ENCODE measurements at regions of chr19 and their contacts with region 1.

Region 1: GRCh38 chr19:40403262-40403984 is 9.8 kb downstream of the PRX start:
- DNase-seq: peak; percentile 95
- H3K4me3 ChIP-seq: peak overlapping the region; percentile 41 to 68 (median 59)
- H3K27ac ChIP-seq: peak overlapping the region; percentile 86 to 96 (median 90)
- H3K4me1 ChIP-seq: peaks cover 0 to 26% (median 12%) of the 10 kb centered on the region in 4 donors
- H3K27me3 ChIP-seq: no peaks in the 10 kb centered on the region
- CTCF ChIP-seq: no peak
- EP300 ChIP-seq: no peak
- POLR2A ChIP-seq: peak in 1 of 2 donors; percentile 15

Region 2: DNA sequence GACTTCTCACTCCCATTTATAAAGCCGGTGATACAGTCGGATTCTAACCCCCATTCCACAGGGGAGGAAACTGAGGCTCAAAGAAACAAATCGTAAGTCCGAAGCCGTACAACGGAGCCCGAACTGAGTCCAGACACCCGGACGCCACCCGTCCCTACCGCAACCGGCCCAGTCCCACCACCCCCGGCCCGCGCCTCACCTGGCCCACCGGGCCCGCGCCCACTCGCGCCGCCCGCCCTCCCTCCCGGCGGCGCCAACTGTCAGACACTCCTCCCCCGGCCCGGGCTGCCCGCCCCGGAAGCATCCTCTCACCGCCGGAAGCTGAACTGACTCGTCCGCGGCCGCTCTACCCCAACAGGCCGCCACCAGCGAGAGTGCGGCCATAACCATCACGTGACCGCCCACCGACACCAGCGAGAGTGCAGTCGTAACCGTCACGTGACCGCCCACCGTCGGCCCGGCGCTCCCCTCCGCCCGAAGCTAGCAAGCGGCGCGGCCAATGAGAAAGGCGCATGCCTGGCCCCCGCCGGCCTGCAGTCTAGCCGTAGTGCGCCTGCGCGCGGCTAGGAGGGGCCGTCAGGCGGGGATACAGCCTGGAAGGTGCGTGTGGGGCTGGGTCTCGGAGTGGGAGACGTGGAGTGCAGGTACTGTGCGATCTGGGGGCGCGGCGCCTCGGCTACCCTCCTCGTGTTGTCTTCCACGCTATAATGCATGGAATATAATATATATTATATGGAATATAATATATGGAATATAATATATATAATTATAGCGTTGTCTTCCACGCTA is 55.1 kb before region 1 on chr19 and contains the starts of genes C19orf47 and PLD3:
- intact Hi-C with region 1: loop called (anchors 5 kb)
- DNase-seq: peak; percentile 100
- H3K4me3 ChIP-seq: peak within 1 kb of the TSS; percentile 69 to 90 (median 76)
- H3K27ac ChIP-seq: peak within 1 kb of the TSS; percentile 78 to 84 (median 84)
- H3K4me1 ChIP-seq: peaks cover 0 to 30% (median 22%) of the 10 kb centered on the region in 4 donors
- H3K27me3 ChIP-seq: no peaks in the 10 kb centered on the region
- CTCF ChIP-seq: no peak
- EP300 ChIP-seq: peak in 1 of 4 donors; percentile 80
- POLR2A ChIP-seq: peak; percentile 91 to 93
- total RNA-seq, gene C19orf47: 8.9 to 12.8 (median 11.5) TPM
- total RNA-seq, gene PLD3: 164 to 270 (median 230) TPM

Region 3: DNA sequence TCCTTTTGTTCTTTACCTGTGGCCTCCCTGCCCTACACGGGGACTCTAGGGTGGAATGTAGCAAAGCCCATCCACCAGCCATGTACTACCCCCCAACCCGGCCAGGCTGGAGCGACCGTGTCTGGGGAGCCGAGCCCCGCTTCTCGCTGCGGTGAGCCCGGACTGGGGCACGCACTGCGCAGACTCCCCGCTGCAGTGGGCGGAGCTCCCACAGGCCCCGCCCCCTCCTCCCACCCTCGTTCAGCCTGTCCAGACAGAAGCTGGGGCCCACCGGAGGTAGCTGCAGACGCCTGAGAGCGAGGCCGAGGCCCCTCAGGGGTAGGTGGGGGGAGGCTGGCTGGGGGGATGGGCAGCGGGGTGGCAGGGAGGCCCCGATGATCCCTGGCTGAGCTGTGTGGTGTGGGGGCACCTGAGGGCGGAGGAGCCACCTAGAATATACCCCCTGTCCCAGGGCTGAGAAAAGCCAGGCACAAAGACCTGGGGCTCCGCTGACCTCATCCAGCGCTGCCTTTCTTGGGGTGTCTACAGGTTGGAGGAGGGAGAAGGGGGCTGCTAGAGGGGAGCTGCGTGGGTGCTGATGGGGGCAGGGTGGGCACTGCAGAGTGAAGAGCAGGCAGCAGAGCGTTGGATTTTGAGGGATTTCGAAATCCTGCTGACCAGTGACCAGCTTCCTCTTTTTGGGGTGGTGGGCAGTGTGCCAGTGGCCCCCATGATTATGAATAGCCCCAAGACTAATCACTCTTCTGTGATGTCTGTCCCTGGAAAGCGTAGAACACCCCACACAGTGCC is 37.6 kb before region 1 on chr19:
- intact Hi-C with region 1: loop called (anchors 5 kb)
- DNase-seq: peak; percentile 84
- H3K4me3 ChIP-seq: peak overlapping the region; percentile 21 to 51 (median 42)
- H3K27ac ChIP-seq: peak overlapping the region in 3 of 4 donors; percentile 38 to 71 (median 45)
- H3K4me1 ChIP-seq: peaks cover 0 to 22% (median 18%) of the 10 kb centered on the region in 4 donors
- H3K27me3 ChIP-seq: no peaks in the 10 kb centered on the region
- CTCF ChIP-seq: no peak
- EP300 ChIP-seq: no peak
- POLR2A ChIP-seq: no peak

Region 4: GRCh38 chr19:40452016-40452415 is 48.6 kb after region 1 on chr19:
- intact Hi-C with region 1: no loop called
- DNase-seq: no peak
- H3K4me3 ChIP-seq: no peak overlapping the region
- H3K27ac ChIP-seq: no peak overlapping the region
- H3K4me1 ChIP-seq: no peaks in the 10 kb centered on the region
- H3K27me3 ChIP-seq: no peaks in the 10 kb centered on the region
- CTCF ChIP-seq: no peak
- EP300 ChIP-seq: no peak
- POLR2A ChIP-seq: no peak